ENCODE measurements at regions of chr1 and their contacts with region 1.

Region 1: GRCh38 chr1:210448297-210448892 is 119.7 kb downstream of the HHAT start:
- DNase-seq: peak; percentile 30
- H3K4me3 ChIP-seq: no peak overlapping the region
- H3K27ac ChIP-seq: no peak overlapping the region
- H3K27me3 ChIP-seq: no peaks in the 10 kb centered on the region
- CTCF ChIP-seq: peak; percentile 75

Region 2: GRCh38 chr1:210321552-210321951 is 126.8 kb before region 1 on chr1:
- CTCF ChIA-PET with region 1: no interaction called
- POLR2A ChIA-PET with region 1: no interaction called
- DNase-seq: no peak
- H3K4me3 ChIP-seq: no peak overlapping the region
- H3K27ac ChIP-seq: no peak overlapping the region
- H3K27me3 ChIP-seq: peaks cover 9% of the 10 kb centered on the region
- CTCF ChIP-seq: no peak

Region 3: DNA sequence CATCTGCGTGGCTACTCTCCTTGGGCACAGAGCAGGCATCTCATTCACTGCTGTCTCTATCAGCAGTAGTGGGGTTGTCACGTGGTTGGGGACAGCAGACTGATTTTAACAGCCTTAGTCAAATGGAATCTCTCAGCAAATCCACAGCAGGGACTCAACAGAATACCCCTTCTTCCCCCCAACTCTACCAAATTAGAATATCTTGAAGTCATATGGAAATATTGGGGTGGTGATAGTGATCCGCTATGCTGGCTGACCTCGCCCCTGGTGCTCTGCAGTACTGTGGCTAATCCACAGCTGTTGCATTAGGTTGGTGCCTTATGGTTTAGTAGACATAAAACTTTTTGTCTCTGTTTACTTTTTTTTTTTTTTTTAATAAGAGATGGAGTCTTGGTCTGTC is 95.8 kb before region 1 on chr1:
- CTCF ChIA-PET with region 1: no interaction called
- POLR2A ChIA-PET with region 1: no interaction called
- DNase-seq: no peak
- H3K4me3 ChIP-seq: no peak overlapping the region
- H3K27ac ChIP-seq: no peak overlapping the region
- H3K27me3 ChIP-seq: peaks cover 3% of the 10 kb centered on the region
- CTCF ChIP-seq: no peak

Region 4: DNA sequence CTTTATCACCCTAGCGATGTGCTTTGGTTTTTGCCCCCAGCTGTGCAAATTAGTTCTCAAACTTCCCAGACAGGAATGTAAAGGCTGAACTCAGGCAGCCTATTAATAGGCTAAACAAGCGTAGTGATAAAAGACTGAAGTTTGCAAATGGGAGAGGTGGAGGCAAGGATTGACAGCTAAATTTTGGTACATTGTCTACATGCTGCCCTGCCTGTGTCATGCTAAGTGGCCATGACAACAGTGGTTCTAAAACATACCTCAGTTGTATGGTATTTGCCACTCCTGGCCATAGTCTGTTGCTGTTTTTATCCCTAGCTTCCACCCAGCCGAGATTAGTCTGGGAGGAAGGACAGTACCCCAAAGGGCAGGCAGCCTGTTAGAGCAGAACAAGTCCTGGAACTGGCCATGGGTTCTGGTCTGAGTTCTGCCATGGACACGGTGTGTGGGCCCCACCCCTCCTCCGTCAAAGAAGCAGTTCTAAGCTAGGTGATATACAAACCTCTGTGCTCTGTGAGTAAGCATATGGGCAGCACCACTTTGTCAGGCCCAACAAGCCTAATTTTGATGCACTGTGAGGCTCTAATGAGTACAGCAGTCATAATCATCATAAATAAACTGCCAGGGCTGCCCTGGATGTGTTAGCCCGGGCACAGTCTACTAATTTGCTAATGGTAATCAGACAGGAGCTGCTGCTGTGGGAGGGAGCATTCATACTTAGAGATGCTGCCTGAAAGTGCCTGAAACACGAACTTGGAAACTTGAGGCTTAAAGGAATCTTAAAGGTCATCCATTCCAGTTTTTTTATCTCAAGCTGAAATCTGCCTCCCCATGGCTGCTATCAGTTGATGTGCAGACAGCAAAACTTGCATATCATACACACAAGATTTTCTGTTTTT is 57.5 kb after region 1 on chr1:
- CTCF ChIA-PET with region 1: interaction called, 12 read pairs
- POLR2A ChIA-PET with region 1: no interaction called
- DNase-seq: no peak
- H3K4me3 ChIP-seq: no peak overlapping the region
- H3K27ac ChIP-seq: no peak overlapping the region
- H3K27me3 ChIP-seq: no peaks in the 10 kb centered on the region
- CTCF ChIP-seq: no peak

Region 5: GRCh38 chr1:210568631-210569030 is 120.2 kb after region 1 on chr1:
- CTCF ChIA-PET with region 1: interaction called, 16 read pairs
- POLR2A ChIA-PET with region 1: no interaction called
- DNase-seq: no peak
- H3K4me3 ChIP-seq: no peak overlapping the region
- H3K27ac ChIP-seq: no peak overlapping the region
- H3K27me3 ChIP-seq: peaks cover 2% of the 10 kb centered on the region
- CTCF ChIP-seq: no peak

Region 6: DNA sequence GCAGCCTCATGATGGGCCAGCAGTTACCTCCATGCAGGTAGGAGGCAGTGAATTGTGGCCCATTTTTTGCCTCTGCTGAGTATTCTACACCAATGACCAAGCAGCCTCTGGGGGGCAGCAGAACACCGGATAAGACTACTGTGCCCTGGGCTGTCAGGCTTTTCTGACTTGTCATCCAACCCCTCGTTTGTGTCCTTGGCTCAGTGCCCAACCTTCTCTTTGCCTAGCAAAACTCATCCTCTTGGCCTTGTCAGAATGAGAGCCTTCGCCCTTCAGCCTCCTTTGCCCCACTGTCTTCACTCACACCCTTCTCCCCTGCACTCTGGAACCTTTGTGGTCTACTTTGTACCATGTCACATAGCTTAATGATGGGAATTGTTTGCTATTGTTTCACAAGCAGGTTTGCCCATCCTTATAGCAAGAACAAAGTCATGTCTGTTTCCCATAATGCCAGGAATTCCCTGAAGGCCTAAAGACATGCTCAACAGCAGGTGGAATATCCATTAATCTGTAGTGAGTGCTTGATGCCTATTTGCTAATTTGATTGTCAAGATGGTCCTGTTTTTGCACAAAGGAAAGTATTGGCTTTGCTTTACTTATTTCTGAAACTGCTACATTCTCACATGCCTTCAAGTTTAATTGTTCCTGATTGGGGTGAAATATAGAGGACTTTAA is 136.2 kb after region 1 on chr1:
- CTCF ChIA-PET with region 1: interaction called, 63 read pairs
- POLR2A ChIA-PET with region 1: no interaction called
- DNase-seq: peak; percentile 34
- H3K4me3 ChIP-seq: no peak overlapping the region
- H3K27ac ChIP-seq: no peak overlapping the region
- H3K27me3 ChIP-seq: no peaks in the 10 kb centered on the region
- CTCF ChIP-seq: peak; percentile 81

Measured in AG04450 (cell line).